WTC11 (cell line): ENCODE measurements at regions of chr19 and their contacts with region 1.

Region 1: DNA sequence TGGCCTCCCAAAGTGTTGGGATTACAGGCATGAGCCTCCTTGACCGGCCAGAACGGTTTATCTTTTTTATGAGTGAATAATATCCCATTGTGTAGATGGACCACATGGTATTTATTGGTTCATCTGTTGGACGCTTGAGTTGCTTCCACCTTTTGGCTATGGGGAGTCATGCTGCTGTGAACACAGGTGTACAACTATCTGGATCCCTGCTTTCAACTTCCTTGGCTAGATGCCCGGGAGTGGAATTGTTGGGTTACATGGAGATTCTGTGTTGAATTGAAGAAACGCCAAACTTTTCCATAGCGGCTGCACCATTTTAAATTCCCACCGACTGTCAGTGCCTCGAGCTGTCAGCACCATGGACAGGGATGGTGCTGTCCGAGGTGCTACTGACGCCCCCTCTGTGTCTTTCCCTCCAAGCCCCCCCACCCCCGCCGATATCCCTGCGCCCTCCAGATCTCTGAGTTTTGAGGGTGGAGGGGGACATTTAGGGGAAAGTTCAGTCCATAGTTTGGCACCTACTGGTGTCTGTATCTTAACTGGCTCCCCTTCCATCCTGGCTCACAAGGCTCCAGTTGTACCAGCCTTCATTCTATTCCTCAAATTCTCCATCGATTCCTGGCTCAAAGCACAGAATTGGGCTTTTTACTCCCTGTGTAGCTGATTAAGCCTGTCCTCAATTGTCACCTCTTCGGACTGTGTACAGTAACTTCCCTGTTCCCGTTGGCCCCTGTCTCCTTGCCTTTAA is 27.3 kb downstream of the PNPLA6 start:
- DNase-seq: peak; percentile 47
- ATAC-seq: no peak
- H3K4me3 Mint-ChIP-seq: no peak overlapping the region
- H3K27ac Mint-ChIP-seq: no peak overlapping the region
- H3K4me1 Mint-ChIP-seq: no peaks in the 10 kb centered on the region
- H3K27me3 Mint-ChIP-seq: no peaks in the 10 kb centered on the region; the same call in 1 of the 2 replicates
- CTCF ChIP-seq: no peak

Region 2: GRCh38 chr19:7373862-7374261 is 189.0 kb before region 1 on chr19:
- CTCF ChIA-PET with region 1: no interaction called
- POLR2A ChIA-PET with region 1: no interaction called
- DNase-seq: no peak
- ATAC-seq: no peak
- H3K4me3 Mint-ChIP-seq: no peak overlapping the region
- H3K27ac Mint-ChIP-seq: no peak overlapping the region
- H3K4me1 Mint-ChIP-seq: peaks cover 4% of the 10 kb centered on the region
- H3K27me3 Mint-ChIP-seq: peaks cover 4% of the 10 kb centered on the region; the same call in 1 of the 2 replicates
- CTCF ChIP-seq: no peak

Region 3: GRCh38 chr19:7394731-7395359 is 168.0 kb before region 1 on chr19:
- CTCF ChIA-PET with region 1: interaction called, 10 read pairs
- POLR2A ChIA-PET with region 1: no interaction called
- DNase-seq: peak; percentile 91
- ATAC-seq: peak; percentile 83
- H3K4me3 Mint-ChIP-seq: peak overlapping the region; percentile 86
- H3K27ac Mint-ChIP-seq: no peak overlapping the region
- H3K4me1 Mint-ChIP-seq: peaks cover 23% of the 10 kb centered on the region
- H3K27me3 Mint-ChIP-seq: no peaks in the 10 kb centered on the region; the same call in 1 of the 2 replicates
- CTCF ChIP-seq: no peak

Region 4: GRCh38 chr19:7506385-7507328 is 56.2 kb before region 1 on chr19:
- CTCF ChIA-PET with region 1: interaction called, 16 read pairs
- POLR2A ChIA-PET with region 1: no interaction called
- DNase-seq: peak; percentile 99
- ATAC-seq: peak; percentile 88
- H3K4me3 Mint-ChIP-seq: peak overlapping the region; percentile 62
- H3K27ac Mint-ChIP-seq: peak overlapping the region; percentile 76
- H3K4me1 Mint-ChIP-seq: peaks cover 19% of the 10 kb centered on the region
- H3K27me3 Mint-ChIP-seq: peaks cover 48% of the 10 kb centered on the region
- CTCF ChIP-seq: no peak

Region 5: DNA sequence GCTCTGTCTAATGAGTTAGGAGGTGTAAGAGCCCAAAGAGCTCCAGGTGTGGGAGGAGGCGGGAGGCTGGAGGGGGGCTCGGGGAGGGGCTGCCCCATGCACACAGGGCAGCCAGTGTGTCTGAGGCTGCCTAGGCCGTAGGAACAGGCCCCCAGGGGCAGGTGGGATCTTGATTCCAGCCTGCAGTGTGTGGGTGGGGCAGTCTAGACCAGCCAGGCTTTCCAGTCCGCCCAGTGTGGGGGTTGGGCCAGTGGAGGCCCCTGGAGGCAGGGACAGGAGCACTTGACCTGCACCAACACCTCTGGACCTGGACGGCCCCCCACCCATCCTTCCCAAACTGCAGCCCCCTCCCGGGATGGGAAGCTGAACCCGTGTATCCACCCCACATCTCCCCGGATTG is 27.4 kb after region 1 on chr19:
- CTCF ChIA-PET with region 1: interaction called, 85 read pairs
- POLR2A ChIA-PET with region 1: no interaction called
- DNase-seq: no peak
- ATAC-seq: peak; percentile 59
- H3K4me3 Mint-ChIP-seq: no peak overlapping the region
- H3K27ac Mint-ChIP-seq: no peak overlapping the region
- H3K4me1 Mint-ChIP-seq: peaks cover 2% of the 10 kb centered on the region
- H3K27me3 Mint-ChIP-seq: peaks cover 16% of the 10 kb centered on the region
- CTCF ChIP-seq: no peak

Region 6: GRCh38 chr19:7629347-7630054 is 66.7 kb after region 1 on chr19 and contains the starts of genes PET100 and XAB2:
- CTCF ChIA-PET with region 1: interaction called, 32 read pairs
- POLR2A ChIA-PET with region 1: no interaction called
- DNase-seq: peak; percentile 92
- ATAC-seq: peak; percentile 95
- H3K4me3 Mint-ChIP-seq: peak within 1 kb of the TSS; percentile 90
- H3K27ac Mint-ChIP-seq: peak within 1 kb of the TSS; percentile 98
- H3K4me1 Mint-ChIP-seq: peaks cover 24% of the 10 kb centered on the region
- H3K27me3 Mint-ChIP-seq: peaks cover 6% of the 10 kb centered on the region
- CTCF ChIP-seq: no peak
- total RNA-seq, gene PET100: 111 to 126 TPM (median 122 TPM) in 3 replicates
- total RNA-seq, gene XAB2: 65.7 to 71.9 TPM (median 67.4 TPM) in 3 replicates

Region 7: DNA sequence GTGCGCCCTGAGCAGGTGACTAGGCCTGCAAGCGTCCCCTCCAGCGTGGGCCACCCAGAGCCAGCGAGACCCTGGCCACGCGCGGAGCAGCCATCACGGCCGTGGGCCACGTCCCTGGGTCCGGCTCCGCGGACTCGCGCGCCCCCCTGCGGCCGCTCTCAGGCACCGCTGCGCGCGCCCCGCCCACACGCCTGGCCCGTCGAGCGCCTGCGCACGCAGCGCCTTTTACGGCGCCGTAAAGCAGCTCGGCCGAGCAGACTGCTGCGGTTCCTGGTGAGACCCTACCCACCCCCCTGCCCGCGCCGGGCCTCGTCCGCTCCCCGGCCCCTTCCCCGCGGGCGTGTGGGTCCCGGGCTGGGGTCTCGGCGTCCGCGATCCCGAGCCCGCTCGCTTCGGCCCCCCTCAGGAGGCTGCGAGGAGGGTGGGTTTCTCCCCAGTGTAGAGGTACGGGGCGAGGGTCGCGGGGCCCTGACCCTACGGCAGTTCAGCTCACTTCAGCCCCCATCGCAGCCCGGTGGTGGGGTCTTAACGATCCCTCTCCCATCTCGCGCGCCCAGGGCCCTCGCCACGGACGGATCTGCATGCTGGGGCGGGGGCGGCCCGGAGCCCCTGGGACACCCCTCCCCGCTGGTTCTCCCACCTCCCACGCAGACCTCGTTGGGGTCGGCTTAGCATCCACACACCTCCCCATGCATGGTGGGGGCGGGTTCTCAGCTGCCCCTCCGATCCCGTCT is 118.0 kb after region 1 on chr19 and contains the start of gene TRAPPC5:
- CTCF ChIA-PET with region 1: interaction called, 99 read pairs
- POLR2A ChIA-PET with region 1: no interaction called
- DNase-seq: peak; percentile 86
- ATAC-seq: peak; percentile 60
- H3K4me3 Mint-ChIP-seq: peak within 1 kb of the TSS; percentile 79
- H3K27ac Mint-ChIP-seq: no peak within 1 kb of the TSS
- H3K4me1 Mint-ChIP-seq: peaks cover 16% of the 10 kb centered on the region
- H3K27me3 Mint-ChIP-seq: peaks cover 37% of the 10 kb centered on the region
- CTCF ChIP-seq: peak; percentile 82
- total RNA-seq, gene TRAPPC5: 122 to 127 TPM (median 124 TPM) in 3 replicates

Region 8: GRCh38 chr19:7861955-7862951 is 299.4 kb after region 1 on chr19:
- CTCF ChIA-PET with region 1: interaction called, 15 read pairs
- POLR2A ChIA-PET with region 1: no interaction called
- DNase-seq: peak; percentile 99
- ATAC-seq: peak; percentile 71
- H3K4me3 Mint-ChIP-seq: peak overlapping the region; percentile 79
- H3K27ac Mint-ChIP-seq: no peak overlapping the region
- H3K4me1 Mint-ChIP-seq: peaks cover 21% of the 10 kb centered on the region
- H3K27me3 Mint-ChIP-seq: peaks cover 77% of the 10 kb centered on the region
- CTCF ChIP-seq: peak; percentile 22; the same call in 1 of the 2 replicates